Heart left ventricle (tissue), 16 donors: ENCODE measurements at regions of chr10 and their contacts with region 1.

Region 1: GRCh38 chr10:3570855-3571266 is 214.1 kb downstream of the KLF6 start:
- DNase-seq: peak in 3 of 5 donors; percentile 37 to 71 (median 51)
- ATAC-seq: peak; percentile 16 to 78 (median 63)
- H3K4me3 ChIP-seq: no peak overlapping the region
- H3K27ac ChIP-seq: peak overlapping the region in 10 of 12 donors; percentile 5 to 58 (median 36)
- H3K4me1 ChIP-seq: peaks cover 0 to 37% (median 15%) of the 10 kb centered on the region in 12 donors
- H3K27me3 ChIP-seq: no peaks in the 10 kb centered on the region
- CTCF ChIP-seq: no peak
- POLR2A ChIP-seq: no peak

Region 2: DNA sequence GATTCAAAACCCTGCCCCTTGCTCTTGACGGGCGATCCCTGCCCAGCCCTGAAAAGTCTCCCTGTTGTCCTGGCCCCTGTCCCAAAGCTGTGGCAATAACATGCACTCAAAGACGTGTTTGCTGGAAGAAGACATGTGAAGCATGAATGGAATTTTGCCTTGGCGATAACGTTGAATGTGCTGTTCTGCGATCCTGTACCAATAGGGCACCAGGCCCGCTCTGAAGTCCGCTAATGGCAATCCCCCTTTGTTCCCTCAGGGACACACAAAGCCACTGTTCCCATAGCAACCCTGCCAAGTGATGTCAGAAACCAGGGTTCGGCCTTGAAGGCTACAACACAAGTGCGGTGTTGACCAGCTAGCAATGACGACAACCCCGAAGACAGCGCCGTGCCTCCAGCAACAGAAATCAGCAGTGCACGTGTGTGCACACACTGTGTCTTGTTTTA is 70.4 kb before region 1 on chr10:
- intact Hi-C with region 1: loop called in 3 of 10 experiments (anchors 5 kb)
- DNase-seq: peak; percentile 68 to 91 (median 71)
- ATAC-seq: peak; percentile 92 to 96 (median 94)
- H3K4me3 ChIP-seq: no peak overlapping the region
- H3K27ac ChIP-seq: peak overlapping the region in 10 of 12 donors; percentile 3 to 75 (median 46)
- H3K4me1 ChIP-seq: peaks cover 0 to 24% (median 5%) of the 10 kb centered on the region in 12 donors
- H3K27me3 ChIP-seq: no peaks in the 10 kb centered on the region
- CTCF ChIP-seq: no peak
- POLR2A ChIP-seq: no peak

Region 3: DNA sequence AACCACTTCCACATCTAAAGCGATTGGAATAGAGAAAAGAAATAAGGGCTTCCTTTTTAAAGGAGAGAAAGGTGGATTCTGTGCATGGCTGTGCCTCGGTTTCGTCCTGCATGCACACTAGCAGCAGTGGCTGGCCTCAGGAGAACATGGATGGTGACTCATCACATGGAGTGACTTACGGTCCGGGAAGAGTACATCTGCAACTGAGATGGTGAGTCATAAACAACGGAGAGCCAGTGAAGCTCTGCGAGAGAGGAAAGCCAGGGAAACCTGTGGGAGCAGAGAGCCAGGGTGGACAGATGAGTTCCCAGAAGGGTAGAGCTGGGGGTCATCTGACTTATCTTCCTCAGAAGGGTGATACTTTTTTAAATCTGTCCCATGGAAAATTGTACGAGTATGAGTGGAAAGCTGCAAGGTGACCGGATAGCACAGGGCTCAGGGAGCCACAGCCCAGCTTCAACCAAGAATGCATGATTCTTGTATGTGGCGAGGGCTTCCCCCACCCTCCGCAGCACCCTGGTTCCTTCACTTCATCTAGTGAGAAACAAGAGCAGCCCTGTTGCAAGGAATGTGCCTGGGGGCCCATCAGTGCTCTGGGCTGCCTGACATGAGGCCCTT is 44.9 kb before region 1 on chr10:
- intact Hi-C with region 1: loop called in 1 of 10 experiments (anchors 5 kb)
- DNase-seq: peak in 2 of 5 donors; percentile 42 to 52
- ATAC-seq: peak in 3 of 4 donors; percentile 80 to 92 (median 89)
- H3K4me3 ChIP-seq: no peak overlapping the region
- H3K27ac ChIP-seq: peak overlapping the region in 9 of 12 donors; percentile 1 to 82 (median 66)
- H3K4me1 ChIP-seq: peaks cover 0 to 44% (median 20%) of the 10 kb centered on the region in 12 donors
- H3K27me3 ChIP-seq: no peaks in the 10 kb centered on the region
- CTCF ChIP-seq: no peak
- POLR2A ChIP-seq: no peak

Region 4: DNA sequence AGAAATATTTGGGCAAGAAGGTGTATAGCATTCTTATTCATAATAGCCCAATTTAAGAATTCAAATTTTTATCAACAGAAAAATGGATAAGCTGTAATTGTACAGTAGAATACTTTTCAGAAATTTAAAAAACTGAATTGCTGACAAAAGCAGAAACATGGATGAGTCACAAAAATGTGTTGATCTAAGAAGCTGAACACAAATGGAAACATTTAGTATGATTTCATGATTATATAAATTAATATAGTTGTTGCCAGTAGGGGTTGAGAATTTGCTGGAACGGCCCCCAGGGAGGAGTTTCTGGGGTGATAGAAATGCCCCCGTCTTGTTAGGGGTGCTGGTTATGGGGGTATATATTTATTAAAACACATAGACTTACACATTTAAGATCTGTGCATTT is 35.0 kb after region 1 on chr10:
- intact Hi-C with region 1: no loop called
- DNase-seq: no peak
- ATAC-seq: no peak
- H3K4me3 ChIP-seq: no peak overlapping the region
- H3K27ac ChIP-seq: no peak overlapping the region
- H3K4me1 ChIP-seq: no peaks in the 10 kb centered on the region
- H3K27me3 ChIP-seq: no peaks in the 10 kb centered on the region
- CTCF ChIP-seq: no peak
- POLR2A ChIP-seq: no peak